ENCODE measurements at regions of chr21 and their contacts with region 1.

Region 1: DNA sequence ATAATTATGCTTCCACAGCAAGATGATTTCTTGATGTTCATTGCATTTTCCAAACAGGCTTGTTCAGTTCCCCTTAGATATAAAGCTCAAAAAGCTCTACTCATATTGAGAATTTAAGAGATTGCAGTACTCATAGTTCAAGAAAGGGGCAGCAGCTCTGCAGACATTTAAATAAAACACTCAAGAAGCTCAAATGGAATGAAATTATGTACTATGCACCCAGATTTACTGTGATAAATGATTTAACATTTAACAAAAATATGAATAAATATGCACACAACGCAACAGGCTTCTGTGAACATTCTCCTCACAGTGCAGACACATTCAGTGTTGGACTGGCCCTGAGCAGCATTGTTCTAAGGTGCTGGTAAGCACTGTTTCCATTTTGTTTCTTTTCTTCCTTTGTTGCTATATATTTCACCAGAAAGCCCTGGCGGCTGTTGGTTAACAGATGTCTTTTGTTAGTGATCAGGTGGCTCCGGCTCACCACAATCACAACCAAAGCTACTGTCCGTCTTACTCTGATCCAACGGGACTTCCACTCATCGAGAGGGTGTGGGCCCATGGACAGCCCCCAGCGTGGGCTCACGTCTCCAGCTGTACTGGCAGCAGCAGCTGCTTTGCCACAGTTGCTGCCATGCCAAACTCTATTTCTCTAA is 1440.3 kb downstream of the NCAM2 start:
- DNase-seq: no peak
- ATAC-seq: no peak
- H3K4me3 ChIP-seq: no peak overlapping the region
- H3K4me3 Mint-ChIP-seq: no peak overlapping the region
- H3K27ac ChIP-seq: no peak overlapping the region
- H3K27ac Mint-ChIP-seq: no peak overlapping the region
- H3K4me1 ChIP-seq: no peaks in the 10 kb centered on the region
- H3K4me1 Mint-ChIP-seq: no peaks in the 10 kb centered on the region
- H3K27me3 ChIP-seq: no peaks in the 10 kb centered on the region
- H3K27me3 Mint-ChIP-seq: no peaks in the 10 kb centered on the region
- CTCF ChIP-seq: no peak

Region 2: GRCh38 chr21:21286170-21286798 is 1152.3 kb before region 1 on chr21:
- CTCF ChIA-PET with region 1: no interaction called
- POLR2A ChIA-PET with region 1: no interaction called
- intact Hi-C with region 1: loop called in 1 of 2 experiments (anchors 10 kb)
- DNase-seq: no peak
- ATAC-seq: no peak
- H3K4me3 ChIP-seq: no peak overlapping the region
- H3K4me3 Mint-ChIP-seq: no peak overlapping the region
- H3K27ac ChIP-seq: no peak overlapping the region
- H3K27ac Mint-ChIP-seq: no peak overlapping the region
- H3K4me1 ChIP-seq: no peaks in the 10 kb centered on the region
- H3K4me1 Mint-ChIP-seq: no peaks in the 10 kb centered on the region
- H3K27me3 ChIP-seq: no peaks in the 10 kb centered on the region
- H3K27me3 Mint-ChIP-seq: no peaks in the 10 kb centered on the region
- CTCF ChIP-seq: no peak

Region 3: DNA sequence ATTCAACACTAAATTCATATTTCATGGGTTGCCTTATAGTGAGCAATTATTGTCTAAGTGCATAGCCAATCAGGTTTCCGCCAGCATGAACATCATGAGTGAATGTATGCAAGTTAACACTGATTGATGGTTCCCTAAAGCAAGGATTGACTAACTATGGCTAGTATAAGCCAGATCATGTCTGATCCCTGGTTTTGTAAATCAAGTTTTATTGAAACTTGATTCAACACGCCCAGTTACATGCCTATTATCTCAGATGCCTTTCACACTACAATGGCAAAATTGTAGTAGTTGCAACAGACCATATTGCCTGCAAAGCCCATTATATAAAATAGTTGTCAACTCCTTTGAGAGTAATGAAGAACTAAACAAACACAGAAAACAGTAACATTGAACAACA is 313.0 kb before region 1 on chr21:
- CTCF ChIA-PET with region 1: no interaction called
- POLR2A ChIA-PET with region 1: no interaction called
- intact Hi-C with region 1: no loop called
- DNase-seq: no peak
- ATAC-seq: no peak
- H3K4me3 ChIP-seq: no peak overlapping the region
- H3K4me3 Mint-ChIP-seq: no peak overlapping the region
- H3K27ac ChIP-seq: no peak overlapping the region
- H3K27ac Mint-ChIP-seq: no peak overlapping the region
- H3K4me1 ChIP-seq: no peaks in the 10 kb centered on the region
- H3K4me1 Mint-ChIP-seq: no peaks in the 10 kb centered on the region
- H3K27me3 ChIP-seq: no peaks in the 10 kb centered on the region
- H3K27me3 Mint-ChIP-seq: no peaks in the 10 kb centered on the region
- CTCF ChIP-seq: no peak

Region 4: DNA sequence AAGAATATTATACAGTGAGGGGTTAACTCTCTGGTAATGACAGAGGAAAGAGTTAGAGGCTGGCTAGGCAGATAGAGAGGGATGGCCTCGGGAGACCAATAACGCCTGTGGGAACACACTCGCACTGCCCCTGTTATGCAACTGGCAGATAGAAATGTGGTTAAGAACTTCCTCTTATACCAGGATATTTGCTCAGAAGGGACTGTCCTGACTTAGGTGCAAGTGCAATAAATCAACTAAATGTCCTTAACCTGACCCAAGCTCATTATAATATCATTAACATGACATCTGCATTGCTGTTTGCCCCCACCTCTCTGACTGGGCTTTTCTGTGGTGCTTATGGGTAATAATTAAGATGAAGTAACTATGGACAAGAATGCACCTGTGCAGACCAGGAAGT is 77.7 kb after region 1 on chr21:
- CTCF ChIA-PET with region 1: no interaction called
- POLR2A ChIA-PET with region 1: no interaction called
- intact Hi-C with region 1: no loop called
- DNase-seq: no peak
- ATAC-seq: no peak
- H3K4me3 ChIP-seq: no peak overlapping the region
- H3K4me3 Mint-ChIP-seq: no peak overlapping the region
- H3K27ac ChIP-seq: no peak overlapping the region
- H3K27ac Mint-ChIP-seq: no peak overlapping the region
- H3K4me1 ChIP-seq: no peaks in the 10 kb centered on the region
- H3K4me1 Mint-ChIP-seq: peaks cover 2% of the 10 kb centered on the region
- H3K27me3 ChIP-seq: no peaks in the 10 kb centered on the region
- H3K27me3 Mint-ChIP-seq: no peaks in the 10 kb centered on the region
- CTCF ChIP-seq: no peak

Measured in CD8-positive, alpha-beta T cell (primary cell).